CD8-positive, alpha-beta T cell (primary cell): ENCODE measurements at regions of chr5 and their contacts with region 1.

Region 1: GRCh38 chr5:157858527-157859226 is at the start of gene CLINT1:
- DNase-seq: peak; percentile 66 to 93 (median 87)
- ATAC-seq: peak; percentile 94
- H3K4me3 ChIP-seq: peak within 1 kb of the TSS; percentile 78 to 86
- H3K4me3 Mint-ChIP-seq: peak within 1 kb of the TSS; percentile 89
- H3K27ac ChIP-seq: peak within 1 kb of the TSS; percentile 74 to 90
- H3K27ac Mint-ChIP-seq: peak within 1 kb of the TSS; percentile 95
- H3K4me1 ChIP-seq: peaks cover 41% of the 10 kb centered on the region
- H3K4me1 Mint-ChIP-seq: peaks cover 65% of the 10 kb centered on the region
- H3K27me3 ChIP-seq: no peaks in the 10 kb centered on the region
- H3K27me3 Mint-ChIP-seq: no peaks in the 10 kb centered on the region
- CTCF ChIP-seq: no peak
- total RNA-seq, gene CLINT1: 94.7 to 101 TPM

Region 2: DNA sequence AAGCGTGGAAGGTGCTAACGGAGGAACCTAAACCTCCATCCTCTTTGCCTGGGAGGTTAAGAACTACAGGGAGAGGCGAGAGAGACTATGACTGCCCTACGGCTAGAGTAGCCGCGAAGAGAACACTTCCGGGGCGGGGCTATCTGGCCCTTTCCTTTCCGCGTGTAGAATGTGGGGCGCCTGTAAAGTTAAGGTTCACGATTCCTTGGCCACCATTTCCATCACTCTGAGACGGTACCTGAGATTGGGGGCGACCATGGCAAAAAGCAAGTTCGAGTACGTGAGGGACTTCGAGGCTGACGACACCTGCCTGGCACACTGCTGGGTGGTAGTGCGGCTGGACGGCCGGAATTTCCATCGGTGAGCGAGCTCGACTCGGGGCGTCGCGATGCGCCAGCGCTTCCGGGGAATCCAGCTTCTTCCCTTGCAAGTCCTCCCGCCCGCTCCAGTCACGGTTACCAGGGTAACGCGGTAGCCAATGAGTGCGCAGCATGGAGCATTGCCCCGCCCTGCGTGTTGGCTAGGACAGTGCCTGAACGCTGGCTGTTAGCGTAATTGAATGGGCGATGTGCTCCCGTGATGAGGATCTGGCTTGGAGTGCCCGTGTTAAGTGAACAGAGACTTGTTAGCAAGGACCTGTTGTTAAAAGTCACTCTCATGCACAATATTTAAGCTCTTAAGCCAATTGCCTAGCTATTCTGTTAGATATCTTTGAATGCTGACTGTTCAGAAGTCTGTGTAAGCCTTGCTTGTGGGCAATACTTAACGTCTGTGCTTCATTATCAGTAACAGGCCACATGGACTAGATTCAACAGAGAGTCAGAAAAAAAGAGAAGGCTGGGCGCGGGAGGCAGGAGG is 127.2 kb before region 1 on chr5 and contains the start of gene THG1L:
- CTCF ChIA-PET with region 1: no interaction called
- POLR2A ChIA-PET with region 1: no interaction called
- intact Hi-C with region 1: loop called (anchors 1 to 5 kb)
- DNase-seq: peak; percentile 95 to 99 (median 97)
- ATAC-seq: peak; percentile 94
- H3K4me3 ChIP-seq: peak within 1 kb of the TSS; percentile 75 to 82
- H3K4me3 Mint-ChIP-seq: peak within 1 kb of the TSS; percentile 96
- H3K27ac ChIP-seq: peak within 1 kb of the TSS; percentile 68 to 86
- H3K27ac Mint-ChIP-seq: peak within 1 kb of the TSS; percentile 95
- H3K4me1 ChIP-seq: no peaks in the 10 kb centered on the region
- H3K4me1 Mint-ChIP-seq: peaks cover 14% of the 10 kb centered on the region
- H3K27me3 ChIP-seq: no peaks in the 10 kb centered on the region
- H3K27me3 Mint-ChIP-seq: no peaks in the 10 kb centered on the region
- CTCF ChIP-seq: no peak
- total RNA-seq, gene THG1L: 6.9 to 7.1 TPM

Region 3: DNA sequence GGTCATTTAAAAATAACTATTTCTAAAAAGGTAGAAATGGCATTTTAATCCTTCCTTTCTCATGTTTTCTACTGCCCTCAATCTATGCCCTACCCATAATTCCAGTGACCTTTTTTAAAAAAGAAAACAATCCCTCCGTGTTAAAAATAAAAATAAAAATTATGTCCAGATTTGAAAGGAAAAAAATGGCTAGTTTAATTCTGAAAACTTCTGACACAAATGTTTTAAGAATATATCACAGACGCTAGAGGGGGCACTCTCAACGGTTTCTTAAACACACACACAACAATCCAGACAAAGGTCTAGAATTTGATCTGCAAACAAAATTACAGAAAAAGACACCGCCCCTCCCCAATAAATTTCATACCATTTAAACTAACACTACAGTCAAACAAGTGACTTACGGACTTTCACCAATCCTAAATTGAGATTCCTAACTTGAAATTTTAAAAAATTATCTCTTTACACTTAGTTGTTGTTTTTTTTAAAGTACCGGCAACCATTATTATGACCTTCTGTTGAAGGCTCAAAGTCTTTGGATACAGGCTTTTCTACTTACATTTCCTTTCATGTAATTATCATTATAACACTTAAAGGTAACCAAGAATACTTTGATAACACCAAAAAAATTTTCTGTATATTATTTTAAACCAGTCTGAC is 38.0 kb before region 1 on chr5:
- CTCF ChIA-PET with region 1: interaction called, 5 read pairs
- POLR2A ChIA-PET with region 1: interaction called, 3 read pairs
- intact Hi-C with region 1: loop called (anchors 2 to 5 kb)
- DNase-seq: peak in 3 of 9 experiments; percentile 15 to 62 (median 48)
- ATAC-seq: no peak
- H3K4me3 ChIP-seq: no peak overlapping the region
- H3K4me3 Mint-ChIP-seq: no peak overlapping the region
- H3K27ac ChIP-seq: no peak overlapping the region
- H3K27ac Mint-ChIP-seq: no peak overlapping the region
- H3K4me1 ChIP-seq: no peaks in the 10 kb centered on the region
- H3K4me1 Mint-ChIP-seq: peaks cover 34% of the 10 kb centered on the region
- H3K27me3 ChIP-seq: no peaks in the 10 kb centered on the region
- H3K27me3 Mint-ChIP-seq: no peaks in the 10 kb centered on the region
- CTCF ChIP-seq: peak; percentile 26

Region 4: DNA sequence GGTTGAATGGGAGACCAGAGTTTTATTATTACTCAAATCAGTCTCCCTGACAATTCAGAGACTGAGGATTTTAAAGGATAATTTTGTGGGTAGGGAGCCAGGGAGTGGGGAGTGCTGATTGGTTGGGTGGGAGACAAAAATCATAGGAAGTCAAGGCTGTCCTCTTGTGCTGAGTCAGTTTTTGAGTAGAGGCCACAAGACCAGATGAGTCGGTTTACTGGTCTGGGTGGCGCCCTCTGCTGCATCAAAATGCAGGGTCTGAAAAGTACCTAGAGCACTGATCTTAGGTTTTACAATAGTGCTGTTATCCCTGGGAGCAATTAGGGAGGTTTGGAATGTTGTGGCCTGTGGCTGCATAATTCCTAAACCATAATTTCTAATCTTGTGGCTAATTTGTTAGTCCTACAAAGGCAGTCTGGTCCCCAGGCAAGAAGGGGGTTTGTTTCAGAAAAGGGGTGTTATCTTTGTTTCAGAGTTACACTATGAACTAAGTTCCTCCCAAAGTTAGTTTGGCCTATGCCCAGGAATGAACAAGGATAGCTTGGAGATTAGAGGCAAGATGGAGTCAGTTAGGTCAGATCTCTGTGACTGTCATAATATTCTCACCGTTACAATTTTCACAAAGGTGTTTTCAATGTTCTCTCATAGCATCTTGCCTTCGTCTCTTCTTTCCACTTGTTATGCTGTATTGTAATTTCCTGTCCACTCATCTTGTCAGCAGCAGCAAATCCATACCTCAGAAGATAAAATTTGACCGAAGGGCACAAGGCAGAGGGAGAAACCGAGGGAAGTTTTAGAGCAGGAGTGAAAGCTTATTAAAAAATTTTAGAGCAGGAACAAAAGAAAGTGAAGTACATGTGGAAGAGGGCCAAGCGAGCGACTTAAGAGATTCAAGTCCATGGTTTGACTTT is 59.5 kb after region 1 on chr5:
- CTCF ChIA-PET with region 1: interaction called, 4 read pairs
- POLR2A ChIA-PET with region 1: no interaction called
- intact Hi-C with region 1: loop called (anchors 5 kb)
- DNase-seq: peak; percentile 1 to 64 (median 54)
- ATAC-seq: no peak
- H3K4me3 ChIP-seq: no peak overlapping the region
- H3K4me3 Mint-ChIP-seq: no peak overlapping the region
- H3K27ac ChIP-seq: no peak overlapping the region
- H3K27ac Mint-ChIP-seq: peak overlapping the region; percentile 33
- H3K4me1 ChIP-seq: peaks cover 17% of the 10 kb centered on the region
- H3K4me1 Mint-ChIP-seq: peaks cover 28% of the 10 kb centered on the region
- H3K27me3 ChIP-seq: no peaks in the 10 kb centered on the region
- H3K27me3 Mint-ChIP-seq: no peaks in the 10 kb centered on the region
- CTCF ChIP-seq: peak; percentile 25

Region 5: GRCh38 chr5:157994906-157995519 is 136.3 kb after region 1 on chr5:
- CTCF ChIA-PET with region 1: interaction called, 10 read pairs
- POLR2A ChIA-PET with region 1: no interaction called
- intact Hi-C with region 1: no loop called
- DNase-seq: peak in 7 of 9 experiments; percentile 13 to 64 (median 38)
- ATAC-seq: peak; percentile 71
- H3K4me3 ChIP-seq: no peak overlapping the region
- H3K4me3 Mint-ChIP-seq: no peak overlapping the region
- H3K27ac ChIP-seq: no peak overlapping the region
- H3K27ac Mint-ChIP-seq: no peak overlapping the region
- H3K4me1 ChIP-seq: peaks cover 15% of the 10 kb centered on the region
- H3K4me1 Mint-ChIP-seq: peaks cover 15% of the 10 kb centered on the region
- H3K27me3 ChIP-seq: peaks cover 7 to 17% of the 10 kb centered on the region in 2 experiments
- H3K27me3 Mint-ChIP-seq: peaks cover 31% of the 10 kb centered on the region
- CTCF ChIP-seq: peak; percentile 50

Region 6: DNA sequence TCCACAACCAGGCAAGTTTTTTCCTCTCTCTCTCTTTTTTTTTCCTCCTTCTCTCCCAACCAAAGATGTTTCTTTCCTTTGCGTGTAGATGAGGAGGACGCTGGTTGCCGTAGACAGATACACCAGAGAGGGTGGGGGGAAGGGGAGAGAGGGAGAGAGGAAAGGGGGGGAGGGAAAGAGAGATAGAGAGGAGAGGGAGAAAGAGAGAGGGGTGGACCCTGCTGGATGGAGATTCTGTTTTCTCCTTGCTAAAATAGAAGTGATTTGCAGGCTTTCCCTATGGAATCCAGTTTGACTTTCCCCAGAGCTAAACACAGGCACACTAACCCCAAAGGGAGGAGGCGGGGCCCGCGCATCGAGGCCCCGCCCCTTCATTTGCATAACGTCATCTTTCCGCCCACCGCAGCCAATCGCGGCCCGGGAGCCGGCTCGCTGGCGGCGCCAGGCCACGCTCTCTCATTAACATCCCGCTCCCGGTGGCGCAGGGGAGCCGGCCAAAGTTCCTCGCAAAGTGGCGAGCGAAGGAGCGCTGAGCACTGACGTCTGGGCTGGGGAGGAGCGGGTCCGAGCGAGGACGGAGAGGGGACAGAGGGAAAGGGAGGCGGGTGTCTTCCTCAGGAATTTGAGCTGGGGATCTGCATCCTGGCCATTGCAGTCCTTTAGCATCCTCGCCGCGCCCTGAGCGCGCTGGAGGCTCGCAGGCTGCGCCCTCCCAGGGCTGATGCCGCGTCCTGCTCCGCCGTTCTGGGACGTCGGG is 1241.5 kb after region 1 on chr5:
- CTCF ChIA-PET with region 1: no interaction called
- POLR2A ChIA-PET with region 1: no interaction called
- intact Hi-C with region 1: loop called in 1 of 2 experiments (anchors 5 kb)
- DNase-seq: peak; percentile 52 to 91 (median 77)
- ATAC-seq: peak; percentile 87
- H3K4me3 ChIP-seq: peak overlapping the region; percentile 53 to 71
- H3K4me3 Mint-ChIP-seq: peak overlapping the region; percentile 88
- H3K27ac ChIP-seq: no peak overlapping the region
- H3K27ac Mint-ChIP-seq: peak overlapping the region; percentile 60
- H3K4me1 ChIP-seq: peaks cover 26% of the 10 kb centered on the region
- H3K4me1 Mint-ChIP-seq: peaks cover 42% of the 10 kb centered on the region
- H3K27me3 ChIP-seq: peaks cover 15 to 45% of the 10 kb centered on the region in 2 experiments
- H3K27me3 Mint-ChIP-seq: peaks cover 46% of the 10 kb centered on the region
- CTCF ChIP-seq: no peak

Region 7: GRCh38 chr5:159262859-159263567 is 1404.3 kb after region 1 on chr5 and contains the start of gene UBLCP1:
- CTCF ChIA-PET with region 1: no interaction called
- POLR2A ChIA-PET with region 1: no interaction called
- intact Hi-C with region 1: loop called (anchors 5 to 10 kb)
- DNase-seq: peak; percentile 57 to 92 (median 80)
- ATAC-seq: peak; percentile 86
- H3K4me3 ChIP-seq: peak within 1 kb of the TSS; percentile 89 to 96
- H3K4me3 Mint-ChIP-seq: peak within 1 kb of the TSS; percentile 92
- H3K27ac ChIP-seq: peak within 1 kb of the TSS; percentile 97 to 99
- H3K27ac Mint-ChIP-seq: peak within 1 kb of the TSS; percentile 99
- H3K4me1 ChIP-seq: peaks cover 21% of the 10 kb centered on the region
- H3K4me1 Mint-ChIP-seq: peaks cover 55% of the 10 kb centered on the region
- H3K27me3 ChIP-seq: no peaks in the 10 kb centered on the region
- H3K27me3 Mint-ChIP-seq: no peaks in the 10 kb centered on the region
- CTCF ChIP-seq: no peak
- total RNA-seq, gene UBLCP1: 16.4 to 19.6 TPM